ENCODE measurements at regions of chr6 and their contacts with region 1.

Region 1: DNA sequence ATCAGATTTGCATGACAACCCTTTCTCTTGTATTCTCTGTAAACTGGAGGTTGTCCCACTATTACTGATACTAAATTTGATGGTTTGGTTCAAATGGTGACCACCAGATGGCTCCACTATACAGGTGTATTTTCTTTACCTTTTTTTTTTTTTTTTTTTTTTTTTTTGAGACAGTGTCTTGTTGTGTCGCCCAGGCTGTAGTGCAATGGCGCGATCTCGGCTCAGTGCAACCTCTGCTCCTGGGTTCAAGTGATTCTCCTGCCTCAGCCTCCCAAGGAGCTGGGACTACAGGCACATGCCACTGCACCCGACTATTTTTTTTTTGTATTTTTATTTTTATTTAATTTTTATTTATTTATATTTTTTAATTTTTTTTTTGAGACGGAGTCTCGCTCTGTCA is 6.6 kb upstream of the WTAP start:
- DNase-seq: peak; percentile 77
- ATAC-seq: peak; percentile 57
- H3K4me3 ChIP-seq: no peak overlapping the region
- H3K4me3 Mint-ChIP-seq: no peak overlapping the region
- H3K27ac ChIP-seq: no peak overlapping the region
- H3K27ac Mint-ChIP-seq: no peak overlapping the region
- H3K4me1 ChIP-seq: peaks cover 0 to under 1% of the 10 kb centered on the region in 2 donors
- H3K4me1 Mint-ChIP-seq: peaks cover under 1% of the 10 kb centered on the region
- H3K27me3 ChIP-seq: no peaks in the 10 kb centered on the region
- H3K27me3 Mint-ChIP-seq: no peaks in the 10 kb centered on the region
- CTCF ChIP-seq: peak; percentile 77

Region 2: DNA sequence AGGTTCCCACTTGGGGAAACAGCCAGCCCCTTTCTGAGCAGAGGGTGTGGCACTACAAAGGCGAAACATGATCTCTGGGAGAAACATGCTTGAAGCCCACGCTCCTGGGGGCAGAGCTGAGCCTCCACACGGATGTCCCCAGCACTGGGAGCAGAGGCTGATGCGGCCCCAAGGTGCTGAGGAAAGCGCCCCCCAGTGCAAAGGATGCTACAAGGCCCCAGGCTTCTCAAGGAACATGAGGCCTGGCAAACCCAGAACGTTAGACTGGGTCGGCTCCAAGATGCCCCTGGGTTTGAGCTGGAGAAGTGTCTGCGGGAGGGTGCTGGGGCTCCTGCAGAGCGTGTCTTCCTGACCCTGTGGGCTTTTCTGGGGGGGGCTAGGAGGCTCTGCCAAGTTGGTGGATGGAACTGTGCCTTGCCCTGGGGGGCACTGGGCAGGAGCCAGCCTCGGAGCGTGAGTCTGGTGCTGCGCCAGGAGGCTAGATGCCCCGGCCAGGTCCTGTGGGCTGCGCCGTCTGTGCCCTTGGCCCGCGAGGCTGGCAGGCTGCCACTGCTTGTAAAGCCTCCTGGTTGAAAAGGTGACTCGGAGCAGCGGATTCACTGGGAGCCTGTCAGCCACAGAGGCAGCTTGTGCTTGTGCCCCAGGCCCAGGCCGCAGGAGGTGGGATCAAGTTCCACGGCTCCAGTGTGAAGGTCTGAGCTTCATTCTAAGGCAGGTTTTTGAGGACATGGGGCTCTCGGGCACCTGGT is 1731.0 kb before region 1 on chr6:
- CTCF ChIA-PET with region 1: no interaction called
- POLR2A ChIA-PET with region 1: no interaction called
- intact Hi-C with region 1: no loop called
- DNase-seq: no peak
- ATAC-seq: no peak
- H3K4me3 ChIP-seq: peak overlapping the region in 1 of 5 experiments; percentile 60
- H3K4me3 Mint-ChIP-seq: peak overlapping the region; percentile 91
- H3K27ac ChIP-seq: peak overlapping the region in 1 of 2 donors; percentile 61
- H3K27ac Mint-ChIP-seq: peak overlapping the region; percentile 92
- H3K4me1 ChIP-seq: peaks cover 18 to 37% of the 10 kb centered on the region in 2 donors
- H3K4me1 Mint-ChIP-seq: peaks cover 33% of the 10 kb centered on the region
- H3K27me3 ChIP-seq: peaks cover 0 to 2% (median 0%) of the 10 kb centered on the region in 4 experiments
- H3K27me3 Mint-ChIP-seq: no peaks in the 10 kb centered on the region
- CTCF ChIP-seq: no peak

Region 3: GRCh38 chr6:159739341-159739740 is 18.6 kb after region 1 on chr6:
- CTCF ChIA-PET with region 1: interaction called, 10 read pairs
- POLR2A ChIA-PET with region 1: no interaction called
- intact Hi-C with region 1: no loop called
- DNase-seq: no peak
- ATAC-seq: no peak
- H3K4me3 ChIP-seq: no peak overlapping the region
- H3K4me3 Mint-ChIP-seq: no peak overlapping the region
- H3K27ac ChIP-seq: peak overlapping the region in 1 of 2 donors; percentile 28
- H3K27ac Mint-ChIP-seq: no peak overlapping the region
- H3K4me1 ChIP-seq: peaks cover under 1 to 4% of the 10 kb centered on the region in 2 donors
- H3K4me1 Mint-ChIP-seq: peaks cover 18% of the 10 kb centered on the region
- H3K27me3 ChIP-seq: no peaks in the 10 kb centered on the region
- H3K27me3 Mint-ChIP-seq: no peaks in the 10 kb centered on the region
- CTCF ChIP-seq: no peak